Mammary epithelial cell (primary cell): ENCODE measurements at regions of chr9 and their contacts with region 1.

Region 1: GRCh38 chr9:112333639-112334431 is 416 bp upstream of the PTBP3 start:
- DNase-seq: peak; percentile 94
- H3K4me3 ChIP-seq: peak overlapping the region; percentile 97 to 99 (median 98)
- H3K27ac ChIP-seq: peak overlapping the region; percentile 93
- H3K4me1 ChIP-seq: peaks cover 18% of the 10 kb centered on the region
- H3K27me3 ChIP-seq: no peaks in the 10 kb centered on the region
- CTCF ChIP-seq: peak in 1 of 2 donors; percentile 58

Region 2: GRCh38 chr9:111559000-111559610 is 774.7 kb before region 1 on chr9:
- CTCF ChIA-PET with region 1: no interaction called
- dilution Hi-C with region 1: no loop called
- in situ Hi-C with region 1: no loop called
- intact Hi-C with region 1: no loop called
- DNase-seq: peak; percentile 67
- H3K4me3 ChIP-seq: no peak overlapping the region
- H3K27ac ChIP-seq: no peak overlapping the region
- H3K4me1 ChIP-seq: no peaks in the 10 kb centered on the region
- H3K27me3 ChIP-seq: no peaks in the 10 kb centered on the region
- CTCF ChIP-seq: no peak

Region 3: GRCh38 chr9:112166172-112167140 is 167.4 kb before region 1 on chr9:
- CTCF ChIA-PET with region 1: no interaction called
- dilution Hi-C with region 1: no loop called
- in situ Hi-C with region 1: no loop called
- intact Hi-C with region 1: loop called (anchors 1 kb)
- DNase-seq: peak; percentile 98
- H3K4me3 ChIP-seq: no peak overlapping the region
- H3K27ac ChIP-seq: peak overlapping the region; percentile 88
- H3K4me1 ChIP-seq: peaks cover 38% of the 10 kb centered on the region
- H3K27me3 ChIP-seq: no peaks in the 10 kb centered on the region
- CTCF ChIP-seq: peak; percentile 47 to 49

Region 4: GRCh38 chr9:112233768-112234167 is 100.1 kb before region 1 on chr9:
- CTCF ChIA-PET with region 1: interaction called, 8 read pairs
- dilution Hi-C with region 1: no loop called
- in situ Hi-C with region 1: no loop called
- intact Hi-C with region 1: loop called (anchors 5 kb)
- DNase-seq: peak; percentile 54
- H3K4me3 ChIP-seq: no peak overlapping the region
- H3K27ac ChIP-seq: no peak overlapping the region
- H3K4me1 ChIP-seq: peaks cover 8% of the 10 kb centered on the region
- H3K27me3 ChIP-seq: no peaks in the 10 kb centered on the region
- CTCF ChIP-seq: no peak

Region 5: GRCh38 chr9:112299514-112299913 is 34.3 kb before region 1 on chr9:
- CTCF ChIA-PET with region 1: no interaction called
- dilution Hi-C with region 1: no loop called
- in situ Hi-C with region 1: no loop called
- intact Hi-C with region 1: loop called (anchors 2 kb)
- DNase-seq: peak; percentile 85
- H3K4me3 ChIP-seq: peak overlapping the region in 2 of 3 experiments; percentile 15 to 25
- H3K27ac ChIP-seq: peak overlapping the region; percentile 74
- H3K4me1 ChIP-seq: peaks cover 22% of the 10 kb centered on the region
- H3K27me3 ChIP-seq: no peaks in the 10 kb centered on the region
- CTCF ChIP-seq: no peak

Region 6: GRCh38 chr9:112465352-112465751 is 131.5 kb after region 1 on chr9:
- CTCF ChIA-PET with region 1: interaction called, 10 read pairs
- dilution Hi-C with region 1: no loop called
- in situ Hi-C with region 1: no loop called
- intact Hi-C with region 1: no loop called
- DNase-seq: no peak
- H3K4me3 ChIP-seq: no peak overlapping the region
- H3K27ac ChIP-seq: no peak overlapping the region
- H3K4me1 ChIP-seq: no peaks in the 10 kb centered on the region
- H3K27me3 ChIP-seq: no peaks in the 10 kb centered on the region
- CTCF ChIP-seq: no peak